ENCODE measurements at regions of chr9 and their contacts with region 1.

Region 1: GRCh38 chr9:130712564-130713285 is 19.1 kb downstream of the EXOSC2 start:
- DNase-seq: peak; percentile 98
- H3K4me3 Mint-ChIP-seq: peak overlapping the region; percentile 86
- H3K27ac Mint-ChIP-seq: peak overlapping the region; percentile 89
- H3K4me1 Mint-ChIP-seq: peaks cover 34% of the 10 kb centered on the region
- H3K27me3 Mint-ChIP-seq: no peaks in the 10 kb centered on the region

Region 2: GRCh38 chr9:130665431-130666392 is 47.0 kb before region 1 on chr9:
- CTCF ChIA-PET with region 1: no interaction called
- intact Hi-C with region 1: no loop called
- DNase-seq: no peak
- H3K4me3 Mint-ChIP-seq: no peak overlapping the region
- H3K27ac Mint-ChIP-seq: no peak overlapping the region
- H3K4me1 Mint-ChIP-seq: peaks cover 27% of the 10 kb centered on the region
- H3K27me3 Mint-ChIP-seq: peaks cover 57% of the 10 kb centered on the region

Region 3: GRCh38 chr9:130693426-130694191 is 19.1 kb before region 1 on chr9 and contains the start of gene EXOSC2:
- CTCF ChIA-PET with region 1: interaction called, 13 read pairs
- intact Hi-C with region 1: loop called (anchors 1 kb)
- DNase-seq: peak; percentile 99
- H3K4me3 Mint-ChIP-seq: peak within 1 kb of the TSS; percentile 90
- H3K27ac Mint-ChIP-seq: peak within 1 kb of the TSS; percentile 87
- H3K4me1 Mint-ChIP-seq: peaks cover 38% of the 10 kb centered on the region
- H3K27me3 Mint-ChIP-seq: no peaks in the 10 kb centered on the region
- total RNA-seq, gene EXOSC2: 70.1 to 72.6 TPM

Region 4: DNA sequence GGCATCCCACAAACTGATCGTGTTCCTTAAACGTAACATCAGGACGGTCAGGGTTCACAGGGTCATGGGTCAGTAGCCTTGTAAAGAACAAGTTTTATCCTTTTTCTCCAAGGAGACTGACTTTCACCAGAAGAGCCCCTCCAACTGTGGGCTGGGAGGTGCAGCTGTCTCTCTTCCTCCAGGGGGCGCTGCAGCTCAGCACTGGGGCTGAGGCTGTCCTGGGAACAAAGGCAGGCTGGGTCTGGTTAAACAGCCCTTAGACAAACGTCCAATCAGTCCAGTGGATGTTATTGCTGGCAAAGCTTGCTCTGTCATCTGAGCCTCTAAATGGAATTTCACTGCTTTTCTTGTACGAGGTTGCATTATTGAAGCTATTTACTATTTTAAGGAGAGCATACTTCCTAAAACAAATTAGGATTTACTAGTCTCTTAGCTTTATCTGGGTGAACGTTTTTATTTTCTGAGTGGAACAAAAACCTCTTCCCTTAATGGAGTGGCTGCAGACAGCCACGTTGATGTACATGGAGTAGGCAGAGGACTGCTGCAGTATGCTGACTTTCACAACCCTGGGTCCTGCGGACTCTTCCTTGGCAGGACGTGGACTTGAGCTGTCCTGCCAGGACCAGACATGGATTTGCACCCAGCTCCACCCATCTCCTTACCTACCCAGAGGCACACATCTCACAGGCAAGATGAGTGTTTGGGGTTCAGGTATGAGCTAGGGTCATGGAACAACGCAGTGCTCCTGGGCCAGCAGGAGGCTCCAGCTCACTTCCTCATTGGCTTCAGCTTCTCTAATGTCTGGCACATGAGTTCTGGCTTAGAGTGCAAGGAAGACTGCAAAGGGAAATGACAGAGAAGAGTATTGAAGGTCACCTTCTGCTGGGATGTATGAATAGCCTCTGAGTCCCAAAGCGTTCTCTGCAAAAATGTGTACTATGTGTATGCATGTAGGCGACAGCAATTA is 11.4 kb before region 1 on chr9:
- CTCF ChIA-PET with region 1: interaction called, 11 read pairs
- intact Hi-C with region 1: no loop called
- DNase-seq: peak; percentile 79
- H3K4me3 Mint-ChIP-seq: no peak overlapping the region
- H3K27ac Mint-ChIP-seq: no peak overlapping the region
- H3K4me1 Mint-ChIP-seq: peaks cover 25% of the 10 kb centered on the region
- H3K27me3 Mint-ChIP-seq: no peaks in the 10 kb centered on the region

Region 5: DNA sequence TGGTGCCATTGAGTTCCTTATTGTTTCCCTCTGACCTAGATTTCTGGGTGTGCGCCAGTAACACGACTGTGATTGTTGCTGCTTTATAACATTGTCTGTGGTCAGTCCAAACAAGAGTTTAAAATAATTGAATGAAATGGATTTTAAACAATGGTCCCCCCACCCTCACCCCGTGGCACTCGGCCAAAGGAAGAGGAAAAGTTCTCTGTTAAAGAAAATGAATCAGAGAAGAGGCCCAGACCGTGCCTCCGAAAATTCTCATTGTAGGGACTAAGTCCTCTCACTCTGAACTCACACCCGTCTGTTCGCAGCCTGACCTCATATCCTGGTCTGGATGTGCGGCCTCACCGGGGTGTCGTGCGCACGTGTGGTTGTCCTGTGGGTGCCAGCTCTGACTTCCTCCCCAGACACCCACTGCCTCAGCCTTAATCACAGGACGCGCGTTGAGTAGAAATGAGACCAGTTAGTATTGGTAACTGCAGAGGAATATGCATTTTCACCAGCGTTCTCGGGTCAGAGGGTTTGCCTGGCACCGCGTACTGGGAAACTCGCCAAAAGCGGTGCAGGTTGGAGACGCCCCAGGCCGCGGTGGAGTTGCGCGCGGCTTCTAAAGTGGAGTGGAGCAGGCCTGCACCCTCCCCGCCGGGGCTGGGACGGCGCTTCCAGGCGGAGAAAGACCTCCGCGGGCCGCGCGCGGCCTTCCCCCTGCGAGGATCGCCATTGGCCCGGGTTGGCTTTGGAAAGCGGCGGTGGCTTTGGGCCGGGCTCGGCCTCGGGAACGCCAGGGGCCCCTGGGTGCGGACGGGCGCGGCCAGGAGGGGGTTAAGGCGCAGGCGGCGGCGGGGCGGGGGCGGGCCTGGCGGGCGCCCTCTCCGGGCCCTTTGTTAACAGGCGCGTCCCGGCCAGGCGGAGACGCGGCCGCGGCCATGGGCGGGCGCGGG is 121.9 kb after region 1 on chr9 and contains the start of gene ABL1:
- CTCF ChIA-PET with region 1: no interaction called
- intact Hi-C with region 1: loop called (anchors 1 kb)
- DNase-seq: peak; percentile 87
- H3K4me3 Mint-ChIP-seq: peak within 1 kb of the TSS; percentile 96
- H3K27ac Mint-ChIP-seq: peak within 1 kb of the TSS; percentile 97
- H3K4me1 Mint-ChIP-seq: peaks cover 35% of the 10 kb centered on the region
- H3K27me3 Mint-ChIP-seq: no peaks in the 10 kb centered on the region
- total RNA-seq, gene ABL1: 25.7 to 26.1 TPM

Region 6: DNA sequence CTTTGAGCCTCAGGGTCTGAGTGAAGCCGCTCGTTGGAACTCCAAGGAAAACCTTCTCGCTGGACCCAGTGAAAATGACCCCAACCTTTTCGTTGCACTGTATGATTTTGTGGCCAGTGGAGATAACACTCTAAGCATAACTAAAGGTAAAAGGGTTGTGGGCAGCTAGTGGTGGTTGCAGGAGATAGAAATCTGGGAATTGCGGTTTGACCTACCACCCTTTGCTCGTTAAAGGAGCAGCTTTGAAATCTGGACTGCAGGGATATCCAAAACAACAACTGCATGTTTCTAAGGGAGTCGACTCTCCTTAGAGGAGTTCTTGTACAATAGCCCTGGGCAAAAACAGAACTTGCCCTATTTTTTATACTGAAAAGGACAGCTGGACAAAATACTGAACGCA is 141.4 kb after region 1 on chr9:
- CTCF ChIA-PET with region 1: no interaction called
- intact Hi-C with region 1: no loop called
- DNase-seq: no peak
- H3K4me3 Mint-ChIP-seq: no peak overlapping the region
- H3K27ac Mint-ChIP-seq: no peak overlapping the region
- H3K4me1 Mint-ChIP-seq: no peaks in the 10 kb centered on the region
- H3K27me3 Mint-ChIP-seq: no peaks in the 10 kb centered on the region

Region 7: GRCh38 chr9:130940693-130941576 is 228.2 kb after region 1 on chr9:
- CTCF ChIA-PET with region 1: no interaction called
- intact Hi-C with region 1: loop called (anchors 1 kb)
- DNase-seq: peak; percentile 87
- H3K4me3 Mint-ChIP-seq: no peak overlapping the region
- H3K27ac Mint-ChIP-seq: no peak overlapping the region
- H3K4me1 Mint-ChIP-seq: peaks cover 10% of the 10 kb centered on the region
- H3K27me3 Mint-ChIP-seq: peaks cover 52% of the 10 kb centered on the region

Region 8: GRCh38 chr9:131125128-131126058 is 412.7 kb after region 1 on chr9 and contains the start of gene NUP214:
- CTCF ChIA-PET with region 1: no interaction called
- intact Hi-C with region 1: loop called (anchors 1 kb)
- DNase-seq: peak; percentile 100
- H3K4me3 Mint-ChIP-seq: peak within 1 kb of the TSS; percentile 96
- H3K27ac Mint-ChIP-seq: peak within 1 kb of the TSS; percentile 92
- H3K4me1 Mint-ChIP-seq: peaks cover 32% of the 10 kb centered on the region
- H3K27me3 Mint-ChIP-seq: no peaks in the 10 kb centered on the region
- total RNA-seq, gene NUP214: 40.2 to 41.1 TPM